ENCODE measurements at regions of chr6 and their contacts with region 1.

Region 1: GRCh38 chr6:39228992-39229767 is at the start of gene KCNK5:
- DNase-seq: peak; percentile 93
- H3K4me3 Mint-ChIP-seq: peak within 1 kb of the TSS; percentile 78
- H3K27ac Mint-ChIP-seq: peak within 1 kb of the TSS; percentile 88
- H3K4me1 Mint-ChIP-seq: peaks cover 39% of the 10 kb centered on the region
- H3K27me3 Mint-ChIP-seq: no peaks in the 10 kb centered on the region
- total RNA-seq, gene KCNK5: 16.2 to 16.5 TPM

Region 2: DNA sequence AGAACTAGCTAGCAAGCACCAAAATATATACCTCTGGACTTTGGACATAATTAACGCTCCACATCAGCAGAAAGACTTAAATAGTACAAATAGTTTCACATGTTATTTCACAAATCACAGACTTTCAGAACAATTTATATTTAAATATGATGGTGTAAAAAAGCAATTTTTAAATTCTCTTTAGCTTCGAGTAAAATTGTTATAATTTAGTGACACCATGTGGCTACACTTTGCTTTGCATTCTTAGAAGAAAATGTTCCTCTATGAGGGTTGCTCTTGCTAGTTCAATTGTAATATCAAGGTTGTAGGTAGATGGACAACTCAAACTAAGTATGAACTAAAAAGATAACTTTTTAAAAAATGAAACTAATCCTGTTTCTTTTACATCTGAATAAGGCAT is 658.4 kb before region 1 on chr6:
- CTCF ChIA-PET with region 1: no interaction called
- POLR2A ChIA-PET with region 1: no interaction called
- intact Hi-C with region 1: loop called (anchors 5 kb)
- DNase-seq: no peak
- H3K4me3 Mint-ChIP-seq: no peak overlapping the region
- H3K27ac Mint-ChIP-seq: no peak overlapping the region
- H3K4me1 Mint-ChIP-seq: peaks cover 23% of the 10 kb centered on the region
- H3K27me3 Mint-ChIP-seq: no peaks in the 10 kb centered on the region

Region 3: DNA sequence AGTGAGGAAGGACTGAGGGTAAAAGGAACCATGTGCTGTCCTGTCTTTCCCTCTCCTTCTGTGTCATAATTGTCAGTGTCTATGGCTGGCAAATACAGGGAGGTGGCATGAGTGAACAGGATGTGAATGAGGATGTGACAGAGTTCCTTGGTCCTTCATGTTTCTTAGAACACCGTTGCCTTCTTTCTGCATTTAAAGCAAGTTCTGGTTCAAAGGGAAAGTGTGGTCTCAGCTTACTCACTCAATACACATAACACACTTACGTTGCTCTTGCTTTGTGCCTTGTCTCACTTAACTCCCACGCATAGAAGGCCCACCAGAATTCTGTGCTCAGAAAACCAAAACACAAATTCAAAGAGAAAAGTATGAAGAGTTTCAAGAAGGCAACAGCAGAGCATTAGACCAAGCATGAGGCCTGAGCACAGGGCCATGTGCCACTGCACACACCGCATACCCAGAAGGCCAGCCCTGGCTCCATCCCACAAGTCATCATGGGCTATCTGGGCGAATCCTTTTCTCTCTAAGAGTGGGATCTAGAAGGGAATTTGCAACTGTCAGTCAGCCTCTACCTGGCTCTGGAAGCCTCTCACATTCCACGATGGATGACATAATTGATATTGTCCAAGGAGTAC is 75.3 kb before region 1 on chr6:
- CTCF ChIA-PET with region 1: no interaction called
- POLR2A ChIA-PET with region 1: no interaction called
- intact Hi-C with region 1: loop called (anchors 1 kb)
- DNase-seq: peak; percentile 60
- H3K4me3 Mint-ChIP-seq: no peak overlapping the region
- H3K27ac Mint-ChIP-seq: peak overlapping the region; percentile 75
- H3K4me1 Mint-ChIP-seq: peaks cover 25% of the 10 kb centered on the region
- H3K27me3 Mint-ChIP-seq: peaks cover 23% of the 10 kb centered on the region

Region 4: DNA sequence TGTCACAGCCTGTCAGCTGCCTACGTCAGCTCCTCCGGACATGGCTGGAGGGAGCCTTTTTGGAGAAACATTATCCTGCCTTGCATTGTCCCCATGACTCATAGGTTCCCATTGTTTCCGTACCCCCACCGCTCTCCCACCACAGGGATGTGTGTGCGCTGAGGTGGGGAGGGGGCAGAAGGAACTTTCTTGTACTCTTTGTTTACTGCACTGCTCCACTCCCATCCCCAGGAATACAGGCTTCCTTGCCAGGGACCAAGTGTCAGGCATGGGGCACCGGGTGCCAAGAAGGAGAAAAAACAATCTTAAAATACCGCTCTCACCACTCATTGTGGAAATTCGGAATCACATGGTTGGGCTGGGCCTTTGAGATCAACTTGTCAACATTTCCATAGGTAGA is 50.9 kb before region 1 on chr6:
- CTCF ChIA-PET with region 1: no interaction called
- POLR2A ChIA-PET with region 1: no interaction called
- intact Hi-C with region 1: no loop called
- DNase-seq: no peak
- H3K4me3 Mint-ChIP-seq: no peak overlapping the region
- H3K27ac Mint-ChIP-seq: no peak overlapping the region
- H3K4me1 Mint-ChIP-seq: no peaks in the 10 kb centered on the region
- H3K27me3 Mint-ChIP-seq: no peaks in the 10 kb centered on the region

Region 5: DNA sequence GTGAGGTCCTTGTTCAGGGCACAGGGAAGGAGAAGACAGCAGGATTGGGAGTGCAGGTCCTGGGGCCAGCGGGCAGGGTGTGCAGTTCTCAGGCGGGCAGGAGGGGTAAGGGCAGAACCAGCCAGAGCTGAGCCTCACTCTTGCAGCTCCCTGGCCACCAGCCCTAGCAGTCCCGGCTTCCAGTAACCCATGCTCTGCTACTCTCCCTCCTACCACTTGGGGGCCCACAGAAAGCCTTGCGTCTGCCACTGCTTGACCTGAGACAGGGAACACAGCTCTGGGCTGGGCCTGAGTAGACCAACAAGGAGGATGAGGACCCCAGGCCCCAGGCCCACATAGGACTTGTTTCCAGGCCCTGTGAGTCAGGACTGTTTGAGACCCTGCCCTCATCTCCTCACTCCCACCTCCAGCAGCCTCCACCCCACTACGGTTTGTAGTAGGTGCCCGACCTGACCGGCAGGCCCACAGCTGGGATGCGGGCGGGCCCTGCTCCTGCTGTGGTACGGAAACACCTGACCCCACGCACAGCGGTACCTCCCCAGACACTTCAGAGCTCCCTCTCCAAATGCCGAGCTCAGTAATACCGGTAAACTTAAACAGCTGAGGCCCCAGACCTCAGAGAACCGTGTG is 39.1 kb before region 1 on chr6:
- CTCF ChIA-PET with region 1: no interaction called
- POLR2A ChIA-PET with region 1: no interaction called
- intact Hi-C with region 1: loop called (anchors 5 kb)
- DNase-seq: peak; percentile 37
- H3K4me3 Mint-ChIP-seq: no peak overlapping the region
- H3K27ac Mint-ChIP-seq: no peak overlapping the region
- H3K4me1 Mint-ChIP-seq: peaks cover 4% of the 10 kb centered on the region
- H3K27me3 Mint-ChIP-seq: no peaks in the 10 kb centered on the region

Region 6: GRCh38 chr6:39302669-39303424 is 73.7 kb after region 1 on chr6:
- CTCF ChIA-PET with region 1: interaction called, 15 read pairs
- POLR2A ChIA-PET with region 1: interaction called, 3 read pairs
- intact Hi-C with region 1: loop called (anchors 1 kb)
- DNase-seq: peak; percentile 92
- H3K4me3 Mint-ChIP-seq: peak overlapping the region; percentile 59
- H3K27ac Mint-ChIP-seq: no peak overlapping the region
- H3K4me1 Mint-ChIP-seq: peaks cover 3% of the 10 kb centered on the region
- H3K27me3 Mint-ChIP-seq: no peaks in the 10 kb centered on the region

Region 7: DNA sequence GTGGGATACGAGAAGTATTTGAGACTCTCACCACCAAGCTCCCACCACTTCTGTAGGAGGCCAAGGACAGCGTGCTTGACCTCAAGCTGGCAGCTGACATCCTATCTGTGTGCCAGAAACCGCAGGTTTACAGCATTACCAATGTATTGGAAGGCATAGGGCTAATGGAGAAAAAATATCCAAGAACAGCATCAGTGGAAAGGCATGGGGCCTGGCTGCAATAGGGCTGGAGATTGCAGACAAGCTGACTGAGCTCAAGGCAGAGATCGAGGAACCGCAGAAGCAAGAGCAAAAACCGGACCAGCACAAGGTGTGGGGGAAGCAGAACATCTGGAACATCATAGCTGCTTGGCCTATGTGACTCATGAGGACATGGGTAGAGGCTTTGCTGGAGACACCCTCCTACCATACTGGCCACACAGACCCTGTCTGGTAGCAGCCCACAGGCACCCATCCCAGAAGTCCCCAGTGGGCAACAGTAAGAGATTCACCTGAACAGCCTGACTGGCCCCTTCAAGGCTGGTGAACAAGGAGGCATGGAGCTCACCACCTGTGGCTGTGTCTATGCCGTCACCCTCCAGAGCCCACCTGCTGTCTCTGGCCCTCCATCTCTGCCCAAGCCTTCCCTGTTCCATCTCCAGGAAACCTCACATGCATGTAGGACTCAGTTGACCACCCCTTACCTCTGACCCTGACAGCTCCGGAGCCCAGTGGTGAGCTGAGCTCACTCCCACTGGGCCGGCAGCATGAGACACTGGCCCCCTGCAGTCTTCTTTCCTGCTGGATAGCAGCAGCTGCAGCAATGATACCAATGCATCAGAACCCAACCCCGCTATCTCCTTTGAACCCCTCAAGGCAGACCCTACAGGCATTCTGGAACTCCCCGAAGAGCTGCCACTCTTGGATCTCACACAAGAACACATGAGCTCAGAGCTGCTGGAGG is 325.0 kb after region 1 on chr6:
- CTCF ChIA-PET with region 1: no interaction called
- POLR2A ChIA-PET with region 1: no interaction called
- intact Hi-C with region 1: no loop called
- DNase-seq: no peak
- H3K4me3 Mint-ChIP-seq: no peak overlapping the region
- H3K27ac Mint-ChIP-seq: no peak overlapping the region
- H3K4me1 Mint-ChIP-seq: no peaks in the 10 kb centered on the region
- H3K27me3 Mint-ChIP-seq: peaks cover 10% of the 10 kb centered on the region

Measured in activated CD4-positive, alpha-beta memory T cell treated with anti-CD3 and anti-CD28 coated beads for 36 hours (primary cell).